HepG2 (cell line): ENCODE measurements at regions of chr17 and their contacts with region 1.

Region 1: GRCh38 chr17:53950207-53950857 is 127.6 kb downstream of the KIF2B start:
- DNase-seq: peak; percentile 72
- ATAC-seq: peak; percentile 99
- H3K4me3 ChIP-seq: no peak overlapping the region
- H3K27ac ChIP-seq: no peak overlapping the region
- H3K4me1 ChIP-seq: no peaks in the 10 kb centered on the region
- H3K27me3 ChIP-seq: no peaks in the 10 kb centered on the region
- CTCF ChIP-seq: peak; percentile 65
- EP300 ChIP-seq: no peak
- POLR2A ChIP-seq: no peak
- RAD21 ChIP-seq: peak; percentile 75

Region 2: DNA sequence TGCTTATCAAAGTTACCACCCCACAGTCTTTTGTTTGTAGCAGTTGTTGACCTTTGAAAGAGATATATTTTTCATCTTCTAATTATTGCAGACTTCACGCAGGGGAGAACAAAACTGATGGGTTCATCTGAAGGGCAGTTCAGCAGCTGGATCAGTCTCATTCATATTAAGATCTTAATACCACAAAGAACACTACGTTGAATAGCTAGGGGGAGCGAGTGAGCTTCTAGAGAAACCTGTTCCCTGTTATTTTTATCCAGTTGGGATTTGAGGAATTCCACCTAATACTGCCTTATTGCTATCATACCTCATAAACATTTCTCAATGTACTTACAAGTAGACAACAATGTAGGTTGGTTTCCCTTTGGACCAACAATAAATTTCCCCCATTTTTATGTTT is 433.7 kb before region 1 on chr17:
- CTCF ChIA-PET with region 1: no interaction called
- POLR2A ChIA-PET with region 1: no interaction called
- in situ Hi-C with region 1: no loop called
- intact Hi-C with region 1: loop called (anchors 1 kb)
- DNase-seq: no peak
- ATAC-seq: no peak
- H3K4me3 ChIP-seq: no peak overlapping the region
- H3K27ac ChIP-seq: no peak overlapping the region
- H3K4me1 ChIP-seq: no peaks in the 10 kb centered on the region
- H3K27me3 ChIP-seq: no peaks in the 10 kb centered on the region
- CTCF ChIP-seq: no peak
- EP300 ChIP-seq: no peak
- POLR2A ChIP-seq: no peak
- RAD21 ChIP-seq: no peak

Region 3: DNA sequence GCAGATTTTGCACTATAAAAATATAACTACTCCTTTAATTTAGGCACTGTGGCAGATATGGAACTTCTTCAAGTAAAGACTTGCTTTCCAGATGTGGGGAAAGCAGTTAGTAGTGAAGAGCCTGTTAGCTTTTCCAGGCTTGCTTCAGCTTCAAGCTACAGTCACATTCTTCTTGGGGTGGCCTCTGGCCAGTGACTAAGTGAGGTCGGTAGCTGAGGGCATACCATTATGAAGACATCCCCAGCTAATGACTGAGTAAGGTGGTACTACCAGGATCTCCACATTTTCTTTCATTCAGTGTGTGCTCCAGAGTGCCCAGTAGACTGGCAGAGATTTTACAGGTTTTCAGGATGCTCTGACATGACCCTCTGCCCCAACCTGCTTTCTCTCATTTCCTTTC is 294.7 kb before region 1 on chr17:
- CTCF ChIA-PET with region 1: no interaction called
- POLR2A ChIA-PET with region 1: no interaction called
- in situ Hi-C with region 1: no loop called
- intact Hi-C with region 1: no loop called
- DNase-seq: no peak
- ATAC-seq: no peak
- H3K4me3 ChIP-seq: no peak overlapping the region
- H3K27ac ChIP-seq: no peak overlapping the region
- H3K4me1 ChIP-seq: no peaks in the 10 kb centered on the region
- H3K27me3 ChIP-seq: no peaks in the 10 kb centered on the region
- CTCF ChIP-seq: no peak
- EP300 ChIP-seq: no peak
- POLR2A ChIP-seq: no peak
- RAD21 ChIP-seq: no peak

Region 4: DNA sequence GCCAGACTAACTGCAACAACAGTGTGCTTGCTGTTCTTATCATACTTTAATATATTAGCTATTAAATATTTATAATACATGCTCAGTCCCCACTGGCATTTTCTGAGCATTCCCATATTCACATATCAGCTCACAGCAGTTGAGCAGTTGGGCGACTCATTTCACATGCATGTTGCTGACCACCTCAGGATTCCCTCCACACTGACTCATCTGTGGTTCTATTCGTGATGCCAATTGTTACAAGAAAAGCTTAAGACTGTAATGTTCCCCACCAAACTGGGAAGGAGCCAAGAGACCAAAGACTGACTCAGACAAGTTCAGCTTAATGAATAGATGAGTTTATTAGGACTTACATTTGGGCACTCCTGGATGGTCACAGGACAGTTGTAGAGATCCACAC is 227.9 kb before region 1 on chr17:
- CTCF ChIA-PET with region 1: no interaction called
- POLR2A ChIA-PET with region 1: no interaction called
- in situ Hi-C with region 1: no loop called
- intact Hi-C with region 1: loop called (anchors 2 kb)
- DNase-seq: no peak
- ATAC-seq: no peak
- H3K4me3 ChIP-seq: no peak overlapping the region
- H3K27ac ChIP-seq: no peak overlapping the region
- H3K4me1 ChIP-seq: no peaks in the 10 kb centered on the region
- H3K27me3 ChIP-seq: no peaks in the 10 kb centered on the region
- CTCF ChIP-seq: no peak
- EP300 ChIP-seq: no peak
- POLR2A ChIP-seq: no peak
- RAD21 ChIP-seq: no peak